ENCODE measurements at regions of chr14 and their contacts with region 1.

Region 1: DNA sequence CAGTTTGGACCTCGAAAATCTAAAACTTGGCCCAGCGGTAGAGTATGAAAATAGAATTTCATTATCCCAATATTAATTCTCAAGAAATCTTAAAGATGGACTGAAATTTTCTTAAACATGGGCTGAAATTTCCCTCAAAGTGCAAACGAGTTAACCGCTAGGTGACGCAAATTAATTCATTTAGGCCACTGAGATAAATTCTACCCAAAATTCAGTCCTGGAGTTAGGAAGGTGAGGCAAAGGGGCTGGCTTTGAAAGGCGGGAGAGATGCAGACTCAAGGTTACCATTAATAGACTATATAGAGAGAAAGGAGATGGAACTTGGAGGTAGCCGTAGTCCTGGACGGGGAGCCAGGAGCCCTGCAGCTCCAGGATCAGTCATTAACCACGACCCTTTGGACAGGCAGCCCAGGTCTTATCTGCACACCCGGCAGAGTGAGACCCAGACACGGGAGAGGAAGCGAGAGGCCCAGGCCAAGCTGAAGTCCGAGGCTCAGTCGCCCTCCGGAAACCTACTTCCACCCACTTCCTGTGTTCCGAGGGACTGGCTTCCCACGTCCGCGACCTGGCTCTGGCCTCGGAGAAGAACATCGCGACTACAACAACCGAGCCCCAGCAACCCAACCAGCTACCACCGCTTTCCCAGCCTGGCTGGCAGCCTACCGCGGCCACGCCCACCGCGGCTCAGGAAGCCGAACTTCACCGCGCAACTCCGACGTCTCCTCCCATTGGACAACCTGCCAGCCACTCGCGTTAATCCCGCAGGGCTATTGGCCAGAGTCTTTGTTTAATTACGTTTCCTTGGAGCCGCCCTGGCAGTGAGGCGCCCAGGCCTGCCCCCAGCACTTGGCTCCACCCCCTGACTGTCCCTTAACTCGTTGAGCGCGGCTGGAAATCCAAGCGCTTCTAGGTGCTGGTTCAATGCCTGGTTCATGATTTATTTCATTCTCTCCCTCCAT is at the start of gene EFCAB11:
- DNase-seq: peak; percentile 80
- H3K4me3 ChIP-seq: peak within 1 kb of the TSS; percentile 85
- CTCF ChIP-seq: no peak

Region 2: GRCh38 chr14:89915114-89915878 is 39.1 kb before region 1 on chr14:
- CTCF ChIA-PET with region 1: no interaction called
- POLR2A ChIA-PET with region 1: no interaction called
- DNase-seq: no peak
- H3K4me3 ChIP-seq: no peak overlapping the region
- CTCF ChIP-seq: peak; percentile 78

Region 3: GRCh38 chr14:89941830-89942377 is 12.4 kb before region 1 on chr14:
- CTCF ChIA-PET with region 1: interaction called, 17 read pairs
- POLR2A ChIA-PET with region 1: no interaction called
- DNase-seq: no peak
- H3K4me3 ChIP-seq: no peak overlapping the region
- CTCF ChIP-seq: no peak

Region 4: DNA sequence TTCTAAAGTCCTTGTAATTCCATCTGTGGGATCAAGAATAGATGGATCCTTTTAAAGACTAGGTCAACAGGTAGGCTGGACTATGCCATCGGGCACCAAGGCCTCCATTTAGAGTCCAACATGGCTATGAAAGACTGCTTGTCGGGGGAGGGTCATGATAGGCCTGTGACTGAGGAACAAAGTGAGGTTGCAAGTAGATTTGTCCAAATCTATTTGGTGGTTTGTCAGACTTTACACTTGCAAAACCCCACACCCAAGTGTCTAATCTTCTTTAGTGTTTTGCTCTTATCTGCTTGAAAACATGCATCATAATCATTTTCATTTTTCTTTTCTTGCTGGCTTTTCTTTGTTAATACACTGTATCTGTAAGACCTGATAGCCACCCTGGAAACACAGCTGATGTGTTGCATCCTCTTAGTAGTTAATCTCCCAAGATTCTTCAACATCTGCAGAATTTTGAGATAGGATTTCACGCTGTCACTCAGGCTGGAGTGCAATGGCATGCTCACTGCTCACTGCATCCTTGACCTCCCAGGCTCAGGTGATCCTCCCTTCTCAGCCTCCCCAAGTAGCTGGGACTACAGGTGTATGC is 51.7 kb after region 1 on chr14:
- CTCF ChIA-PET with region 1: no interaction called
- POLR2A ChIA-PET with region 1: no interaction called
- DNase-seq: no peak
- H3K4me3 ChIP-seq: no peak overlapping the region
- CTCF ChIP-seq: no peak

Region 5: DNA sequence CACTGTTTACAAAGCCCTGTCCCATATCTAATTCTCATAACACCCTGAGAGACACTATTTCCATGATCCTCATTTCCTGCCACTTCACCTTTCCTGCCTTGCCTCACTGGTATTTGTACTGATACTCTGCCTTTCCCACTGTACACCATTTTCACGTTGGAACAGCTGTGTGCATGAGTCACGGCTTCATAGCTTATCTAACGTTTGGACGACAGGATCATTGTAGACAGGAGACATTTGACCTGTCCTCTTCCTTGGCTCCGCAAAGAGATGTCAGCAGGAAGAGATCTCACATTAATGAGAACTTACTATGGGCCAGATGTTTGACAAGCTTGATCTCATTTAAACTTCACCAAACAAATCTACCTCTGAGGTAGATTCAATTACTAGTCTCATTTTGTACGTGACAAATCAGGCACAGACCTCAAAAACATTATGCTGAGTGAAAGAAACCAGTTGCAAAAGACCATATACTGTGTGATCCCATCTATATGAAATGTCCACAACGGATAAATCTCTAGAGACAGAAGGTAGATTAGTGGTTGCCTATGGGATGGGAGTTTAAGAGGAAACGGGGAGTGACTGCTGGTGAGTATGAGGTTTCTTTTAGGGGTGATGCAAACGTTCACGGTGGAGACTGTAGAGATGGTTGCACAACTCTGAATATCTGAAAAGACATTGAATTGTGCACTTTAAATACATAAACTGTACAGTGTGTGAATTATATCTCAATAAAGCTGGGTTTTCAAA is 178.6 kb after region 1 on chr14:
- CTCF ChIA-PET with region 1: no interaction called
- POLR2A ChIA-PET with region 1: no interaction called
- DNase-seq: no peak
- H3K4me3 ChIP-seq: no peak overlapping the region
- CTCF ChIP-seq: no peak

Measured in AG04449 (cell line).